ENCODE measurements at regions of chr19 and their contacts with region 1.

Region 1: DNA sequence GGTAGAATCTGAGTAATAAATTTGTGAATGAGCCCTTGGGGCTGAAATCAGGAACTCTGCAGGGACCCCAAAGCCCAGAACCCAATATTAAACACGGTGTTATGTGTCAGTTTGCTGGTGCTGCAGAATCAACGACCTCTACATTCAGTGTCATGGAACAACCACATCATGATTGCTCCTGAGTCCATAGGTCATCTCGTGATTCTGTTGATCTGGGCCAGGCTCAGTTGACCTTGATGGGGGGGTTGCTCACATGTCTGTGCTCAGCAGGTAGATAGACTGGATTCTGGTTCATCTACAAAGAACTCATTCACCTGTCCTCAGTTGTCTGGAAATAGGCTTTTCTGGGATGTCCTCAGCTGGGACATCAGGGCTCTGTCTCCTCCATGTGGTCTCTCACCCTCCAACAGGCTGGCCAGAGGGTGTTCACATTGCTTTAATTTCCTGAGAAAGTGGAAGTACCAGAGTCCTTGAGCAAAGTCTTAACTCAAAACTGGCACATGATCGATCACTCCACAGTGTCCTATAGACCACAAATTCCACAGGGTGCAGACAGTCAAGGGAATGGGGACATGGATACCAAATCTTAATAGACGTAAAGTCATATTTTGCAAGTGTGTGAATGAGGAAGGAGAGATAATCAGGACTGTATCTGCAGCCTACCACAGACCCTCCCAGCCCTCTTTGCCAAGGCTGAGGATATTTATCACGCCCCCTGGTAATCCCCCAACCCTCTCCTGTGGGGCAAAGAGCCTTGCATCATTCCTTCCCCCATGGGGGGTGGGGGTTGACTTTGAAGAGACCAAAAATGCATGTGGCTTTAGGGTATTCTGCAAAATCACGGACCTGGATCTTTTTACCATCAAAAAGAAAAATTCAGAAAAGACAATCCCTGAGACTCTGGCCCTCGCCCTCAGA is 39.3 kb upstream of the IGFL1 start:
- DNase-seq: no peak
- CTCF ChIP-seq: no peak

Region 2: GRCh38 chr19:46022431-46023310 is 167.6 kb before region 1 on chr19 and contains the start of gene PGLYRP1:
- CTCF ChIA-PET with region 1: interaction called, 20 read pairs
- POLR2A ChIA-PET with region 1: no interaction called
- DNase-seq: no peak
- CTCF ChIP-seq: no peak

Region 3: DNA sequence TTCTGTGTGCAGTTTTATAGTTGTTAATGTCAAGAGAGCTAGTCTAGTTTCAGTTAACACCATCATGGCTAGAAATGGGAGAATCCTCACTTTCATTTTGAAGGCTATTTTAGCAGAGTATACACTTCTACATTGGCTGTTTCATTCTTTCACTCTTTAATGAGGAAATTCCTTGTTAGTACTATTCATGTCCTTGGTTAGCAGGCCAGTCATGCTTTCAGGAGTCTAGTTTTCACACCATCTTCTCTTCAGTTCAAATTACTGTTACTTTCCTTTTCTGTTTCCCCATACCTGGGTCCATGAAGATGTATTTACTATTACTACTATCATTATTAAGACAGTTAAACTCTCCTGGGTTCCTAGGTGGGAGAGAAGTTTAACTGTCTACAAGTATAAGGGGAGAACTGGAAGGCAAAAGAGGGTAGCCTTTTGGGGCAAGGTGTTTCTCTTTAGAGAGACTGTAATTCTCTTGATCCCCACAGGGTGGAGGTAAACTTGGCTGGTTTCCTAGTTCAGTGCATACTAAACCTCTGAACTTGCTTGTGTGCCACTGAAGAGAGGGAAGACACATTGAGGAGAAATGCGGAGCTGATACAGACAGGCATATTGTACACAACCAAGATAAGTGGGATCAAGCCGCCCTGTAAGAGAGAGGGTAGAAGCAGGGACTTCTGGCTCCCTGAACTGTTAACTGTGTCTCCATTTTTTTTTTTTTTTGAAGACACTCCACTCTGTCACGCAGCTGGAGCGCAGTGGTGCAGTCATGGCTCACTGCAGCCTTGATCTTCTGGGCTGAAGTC is 108.1 kb before region 1 on chr19:
- CTCF ChIA-PET with region 1: interaction called, 42 read pairs
- POLR2A ChIA-PET with region 1: no interaction called
- DNase-seq: peak; percentile 51
- CTCF ChIP-seq: peak; percentile 45

Region 4: DNA sequence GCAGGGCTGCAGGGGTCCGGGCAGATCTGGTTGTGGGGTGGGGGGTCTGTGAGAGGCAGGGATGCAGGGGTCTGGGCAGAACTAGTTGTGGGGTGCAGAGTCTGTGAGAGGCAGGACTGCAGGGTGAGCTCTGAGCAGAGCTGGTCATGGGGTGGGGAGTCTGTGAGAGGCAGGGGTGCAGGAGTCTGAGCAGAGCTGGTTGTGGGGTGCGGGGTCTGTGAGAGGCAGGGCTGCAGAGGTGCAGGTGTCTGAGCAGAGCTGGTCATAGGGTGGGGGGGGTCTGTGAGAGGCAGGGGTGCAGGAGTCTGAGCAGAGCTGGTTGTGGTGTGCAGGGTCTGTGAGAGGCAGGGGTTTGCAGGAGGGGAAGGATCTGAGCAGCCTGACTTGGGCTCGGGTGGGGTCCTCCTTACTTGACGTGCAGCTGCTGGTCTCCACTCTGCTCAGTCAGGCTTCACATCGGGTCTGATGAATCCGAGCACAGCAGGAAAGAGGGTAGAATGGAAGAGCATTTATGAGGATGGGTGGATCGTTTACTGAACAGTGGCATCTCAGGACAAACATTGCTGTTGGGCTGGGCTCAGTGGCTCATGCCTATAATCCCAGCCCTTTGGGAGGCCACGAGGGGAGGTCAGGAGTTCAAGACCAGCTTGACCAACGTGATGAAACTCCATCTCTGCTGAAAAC is 11.0 kb before region 1 on chr19:
- CTCF ChIA-PET with region 1: interaction called, 10 read pairs
- POLR2A ChIA-PET with region 1: no interaction called
- DNase-seq: no peak
- CTCF ChIP-seq: no peak